ENCODE measurements at regions of chr5 and their contacts with region 1.

Region 1: DNA sequence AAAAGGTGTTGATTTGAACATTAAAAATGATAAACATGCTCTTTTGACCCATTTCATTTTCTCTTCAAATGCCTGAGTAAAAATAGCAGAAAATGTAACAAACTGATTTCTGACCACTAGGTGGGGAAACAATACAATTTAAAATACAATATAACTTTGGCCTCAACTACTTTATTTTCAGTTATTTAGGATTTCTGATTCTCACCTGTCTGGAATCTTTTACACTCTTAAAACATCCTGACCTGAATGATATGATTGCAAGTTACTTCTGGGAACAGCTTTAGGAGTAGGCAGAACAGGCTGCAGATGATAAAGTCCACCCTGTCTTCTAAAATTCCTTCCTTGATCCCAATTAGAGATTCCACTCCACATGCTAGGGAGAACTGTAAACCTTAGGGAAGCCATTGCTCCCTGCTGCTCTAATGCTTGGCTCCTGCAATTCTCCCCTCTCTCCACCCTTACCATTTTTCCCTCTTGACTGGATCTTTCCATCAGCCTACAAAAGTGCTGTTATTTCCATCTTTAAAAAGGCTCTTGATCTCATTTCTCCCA is 70.3 kb downstream of the FYB1 start:
- DNase-seq: no peak
- H3K4me3 Mint-ChIP-seq: no peak overlapping the region
- H3K27ac Mint-ChIP-seq: peak overlapping the region; percentile 76
- H3K4me1 Mint-ChIP-seq: peaks cover 52% of the 10 kb centered on the region
- H3K27me3 Mint-ChIP-seq: no peaks in the 10 kb centered on the region

Region 2: GRCh38 chr5:39164529-39165402 is 15.7 kb after region 1 on chr5:
- intact Hi-C with region 1: loop called (anchors 1 kb)
- DNase-seq: no peak
- H3K4me3 Mint-ChIP-seq: peak overlapping the region; percentile 72
- H3K27ac Mint-ChIP-seq: peak overlapping the region; percentile 96
- H3K4me1 Mint-ChIP-seq: peaks cover 85% of the 10 kb centered on the region
- H3K27me3 Mint-ChIP-seq: no peaks in the 10 kb centered on the region

Region 3: DNA sequence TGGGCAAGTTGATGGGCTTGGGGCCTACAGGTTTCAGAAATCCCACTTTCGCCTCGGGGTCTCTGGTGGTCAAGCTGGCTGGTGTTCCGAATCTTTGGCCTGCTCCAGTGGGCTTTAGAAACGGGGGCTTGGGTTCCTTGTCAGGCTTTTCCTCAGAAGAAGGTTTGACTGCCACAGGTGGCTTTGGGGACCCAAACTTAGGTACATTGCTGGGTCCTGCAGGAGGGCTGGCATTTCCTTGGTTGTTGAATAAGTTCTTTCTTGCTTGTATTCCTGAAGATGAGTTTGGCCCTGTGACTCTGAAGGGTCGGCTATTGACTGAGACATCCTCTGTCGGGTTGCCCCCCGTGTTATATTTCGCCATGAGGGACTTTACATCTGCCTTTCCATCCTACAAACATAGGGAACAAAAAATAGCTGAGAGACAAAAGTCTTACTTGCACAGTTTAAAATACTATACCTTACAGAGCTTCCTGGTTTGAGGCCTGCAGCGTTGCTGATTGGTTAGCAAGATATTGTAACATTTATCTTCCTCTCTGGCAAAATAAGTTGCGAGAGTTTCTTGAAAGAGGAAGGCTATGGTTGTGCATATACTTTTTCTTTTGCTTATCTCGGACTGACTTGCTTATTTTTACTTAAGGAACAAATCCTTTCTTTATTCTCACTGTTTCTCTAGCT is 53.7 kb after region 1 on chr5:
- intact Hi-C with region 1: loop called (anchors 1 kb)
- DNase-seq: no peak
- H3K4me3 Mint-ChIP-seq: peak overlapping the region; percentile 89
- H3K27ac Mint-ChIP-seq: peak overlapping the region; percentile 88
- H3K4me1 Mint-ChIP-seq: peaks cover 64% of the 10 kb centered on the region
- H3K27me3 Mint-ChIP-seq: no peaks in the 10 kb centered on the region

Region 4: DNA sequence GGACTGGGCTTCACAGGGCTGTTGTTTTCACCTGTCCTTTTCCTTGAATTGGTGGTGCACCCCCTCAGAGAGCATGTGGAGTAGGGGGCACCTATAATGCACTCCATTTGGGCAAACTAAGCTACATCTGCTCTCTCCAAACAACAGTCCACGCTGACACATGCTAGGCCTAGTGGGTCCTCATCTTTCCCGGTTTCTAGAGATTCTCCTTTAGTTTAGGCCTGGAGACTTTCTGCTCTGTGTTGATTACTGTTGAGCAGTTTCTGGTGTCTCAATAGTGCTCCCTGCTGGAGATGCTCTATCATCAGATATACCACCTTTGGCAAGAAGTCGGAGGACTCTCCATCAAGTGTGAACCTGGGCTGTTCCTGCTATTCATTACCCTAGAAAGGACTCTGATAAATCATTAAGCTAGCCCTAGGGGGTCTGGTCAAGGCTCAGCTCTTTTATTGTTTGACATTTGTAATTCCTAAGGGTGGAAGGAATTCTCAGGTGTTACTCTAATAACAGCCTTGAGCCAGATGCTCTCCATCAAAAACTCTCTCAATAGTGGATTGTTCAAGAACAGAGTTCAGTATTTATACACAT is 134.3 kb after region 1 on chr5:
- intact Hi-C with region 1: loop called (anchors 1 kb)
- DNase-seq: peak; percentile 54
- H3K4me3 Mint-ChIP-seq: no peak overlapping the region
- H3K27ac Mint-ChIP-seq: no peak overlapping the region
- H3K4me1 Mint-ChIP-seq: peaks cover 22% of the 10 kb centered on the region
- H3K27me3 Mint-ChIP-seq: peaks cover 12% of the 10 kb centered on the region

Region 5: DNA sequence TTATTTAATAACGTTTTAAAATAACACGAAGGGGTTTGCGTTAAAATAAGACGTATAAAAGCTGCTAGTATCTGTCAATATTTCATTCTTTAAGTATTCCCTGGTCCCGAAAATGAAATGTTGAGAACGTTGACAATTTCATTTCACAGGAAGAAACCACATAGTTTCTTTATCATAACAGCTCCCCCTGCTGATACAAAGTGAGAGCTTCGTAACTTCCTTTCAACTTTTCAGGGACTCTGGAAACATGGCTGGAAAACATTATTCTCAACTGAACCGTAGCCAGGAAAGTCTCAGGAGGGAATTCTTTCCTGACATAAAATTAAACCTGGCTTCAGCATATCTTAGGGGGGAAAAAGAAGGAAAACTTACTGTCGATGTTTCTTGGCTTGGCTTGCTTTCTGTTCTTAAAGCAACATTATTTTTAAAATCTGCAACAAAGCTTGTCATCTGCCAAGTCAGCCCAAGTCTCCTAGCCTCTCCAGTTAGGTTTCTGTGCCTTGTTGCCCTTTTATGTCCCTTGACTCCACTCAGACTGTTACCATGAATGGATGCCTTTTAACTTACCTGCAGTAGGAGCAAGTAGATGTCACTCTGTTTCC is 398.6 kb after region 1 on chr5:
- intact Hi-C with region 1: loop called (anchors 5 kb)
- DNase-seq: no peak
- H3K4me3 Mint-ChIP-seq: no peak overlapping the region
- H3K27ac Mint-ChIP-seq: no peak overlapping the region
- H3K4me1 Mint-ChIP-seq: peaks cover 7% of the 10 kb centered on the region
- H3K27me3 Mint-ChIP-seq: peaks cover 6% of the 10 kb centered on the region

Measured in activated T-helper 1 cell treated with anti-CD3 and anti-CD28 coated beads, Interleukin-12 subunit alpha, Interleukin-12 subunit beta, Interleukin-2, Interleukin-4 antibody, amounts not matched to agents 30 ng/mL and 10 ng/mL and 1 ng/mL, durations not matched to agents 14 hours and 24 hours and 36 hours (primary cell).